Posterior cingulate gyrus (tissue), 11 donors: ENCODE measurements at regions of chr1 and their contacts with region 1.

Region 1: DNA sequence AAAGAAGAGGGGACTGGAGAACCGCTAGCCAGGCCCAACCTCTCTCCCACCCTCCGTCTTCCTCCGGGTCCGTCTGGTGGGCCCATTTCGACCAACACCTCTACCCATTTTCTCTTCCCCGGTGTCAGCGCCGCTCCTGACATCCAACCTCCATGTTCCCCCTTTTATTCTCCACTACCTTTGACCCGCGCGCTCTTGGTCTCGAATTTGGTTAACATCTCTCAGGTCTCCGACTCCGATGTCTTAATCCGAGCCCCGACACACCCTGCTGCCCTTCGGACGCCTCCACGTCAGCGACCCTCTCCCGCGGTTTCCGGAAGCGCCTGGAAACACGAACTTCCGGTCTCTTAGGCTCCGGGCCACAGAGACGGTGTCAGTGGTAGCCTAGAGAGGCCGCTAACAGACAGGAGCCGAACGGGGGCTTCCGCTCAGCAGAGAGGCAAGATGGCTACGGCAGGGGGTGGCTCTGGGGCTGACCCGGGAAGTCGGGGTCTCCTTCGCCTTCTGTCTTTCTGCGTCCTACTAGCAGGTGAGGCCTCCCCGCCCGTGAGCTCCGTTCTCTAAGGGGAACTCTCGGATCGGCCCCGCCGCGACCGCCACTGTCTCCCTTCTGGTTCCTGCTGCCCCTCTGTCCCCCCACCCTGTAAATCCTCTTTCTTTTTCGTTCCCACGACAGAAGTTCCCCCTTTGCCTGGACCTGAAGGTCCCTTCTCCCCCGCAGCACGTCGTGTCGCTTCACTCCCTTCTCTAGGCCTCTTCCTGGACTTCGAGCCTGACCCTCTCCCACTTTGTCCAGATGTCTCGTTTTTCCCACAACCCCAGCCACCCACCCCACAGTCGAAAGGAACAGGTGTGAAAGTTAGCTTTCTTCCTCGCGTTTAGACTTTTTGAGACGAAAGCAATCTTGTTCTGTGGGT is at the starts of genes COPA and NCSTN:
- DNase-seq: peak; percentile 84 to 98 (median 90)

Region 2: DNA sequence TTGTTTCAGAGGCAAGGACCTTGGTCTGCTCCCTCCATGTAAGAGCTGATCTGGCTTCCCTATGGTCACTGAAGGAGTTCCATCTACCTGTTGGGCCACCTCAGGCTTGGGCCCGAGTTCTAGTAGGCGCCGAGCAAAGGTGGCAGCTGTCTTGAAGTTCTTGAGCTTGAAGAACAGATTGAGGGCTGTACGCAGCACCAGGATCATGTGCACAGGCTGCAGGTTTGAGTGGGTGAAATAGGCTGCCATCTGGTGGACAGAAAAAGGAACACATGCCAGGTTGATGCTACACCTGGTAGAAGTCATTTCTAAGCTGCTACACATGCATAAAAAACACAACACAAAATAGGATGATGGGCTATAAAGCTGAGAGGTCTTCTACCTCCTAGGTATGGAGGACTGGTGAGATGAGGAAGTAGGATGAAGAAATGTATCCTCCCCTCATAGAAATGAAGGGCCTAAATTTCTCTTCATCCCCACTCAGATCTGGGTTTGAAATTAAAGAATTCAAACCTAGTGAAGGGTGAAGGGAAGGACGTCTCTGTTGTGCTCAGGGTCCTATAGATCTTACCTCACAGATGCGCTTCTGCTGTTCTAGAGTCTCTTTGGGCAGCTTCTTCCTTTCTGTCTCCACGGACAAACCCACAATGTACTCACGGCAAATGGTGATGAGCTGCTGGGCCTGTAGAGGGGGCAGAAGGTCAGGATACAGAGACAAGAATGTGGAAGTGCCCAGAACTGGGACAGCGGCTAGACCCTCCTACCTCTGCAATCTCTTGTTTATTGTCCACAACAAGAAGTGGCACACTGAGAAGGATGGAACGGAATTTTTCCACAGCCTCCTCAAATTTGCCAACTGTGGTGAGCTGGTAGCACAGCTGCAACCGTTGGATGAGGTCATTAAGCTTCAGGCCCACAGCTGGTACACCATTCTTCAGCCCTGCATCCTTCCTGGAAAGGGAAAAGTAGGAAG is 51.7 kb before region 1 on chr1:
- intact Hi-C with region 1: loop called (anchors 10 kb)
- DNase-seq: peak in 9 of 10 donors; percentile 41 to 95 (median 69)

Region 3: DNA sequence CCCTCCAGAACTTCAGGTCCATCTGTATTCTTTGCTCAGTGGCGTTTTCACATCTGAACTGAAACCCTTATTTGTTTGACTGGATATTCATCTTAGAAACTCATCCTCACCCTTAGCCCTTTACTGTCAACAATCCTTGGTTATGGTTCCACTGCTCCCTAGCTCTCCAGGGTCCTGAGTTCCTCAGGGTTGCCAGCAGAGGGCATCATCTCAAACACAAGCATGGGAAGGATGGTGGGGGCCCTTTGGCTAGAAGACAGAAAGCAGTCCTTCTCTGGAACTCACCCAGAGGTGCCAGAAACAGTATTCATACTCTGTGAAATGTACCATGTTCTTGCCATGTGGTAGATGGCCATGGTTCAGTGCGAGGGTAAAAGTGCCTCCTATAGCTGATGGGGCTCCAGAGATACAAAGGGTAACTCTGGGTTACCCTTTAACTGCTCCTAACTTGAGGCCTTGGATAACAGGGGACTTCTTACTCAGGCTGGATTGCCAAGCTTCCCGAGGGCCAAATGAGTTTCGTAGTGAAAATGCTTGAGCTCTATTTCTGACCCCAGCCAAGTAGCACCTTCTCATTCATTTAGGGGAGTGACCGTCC is 11.3 kb after region 1 on chr1:
- intact Hi-C with region 1: no loop called
- DNase-seq: no peak

Region 4: GRCh38 chr1:160366731-160367515 is 23.7 kb after region 1 on chr1 and contains the start of gene NHLH1:
- intact Hi-C with region 1: no loop called
- DNase-seq: no peak

Region 5: GRCh38 chr1:160474392-160475242 is 131.4 kb after region 1 on chr1:
- intact Hi-C with region 1: no loop called
- DNase-seq: no peak